GM13977 (cell line): ENCODE measurements at regions of chr5 and their contacts with region 1.

Region 1: GRCh38 chr5:152560512-152561137 is 155.5 kb upstream of the NMUR2 start:
- DNase-seq: peak; percentile 38
- CTCF ChIP-seq: peak; percentile 82

Region 2: GRCh38 chr5:153147891-153148623 is 587.4 kb after region 1 on chr5:
- in situ Hi-C with region 1: loop called (anchors 25 kb)
- DNase-seq: peak; percentile 6
- CTCF ChIP-seq: peak; percentile 74